ENCODE measurements at regions of chr21 and their contacts with region 1.

Region 1: GRCh38 chr21:30340441-30341241 is 3.1 kb upstream of the KRTAP27-1 start:
- DNase-seq: peak in 1 of 3 donors; percentile 64
- ATAC-seq: no peak
- H3K4me3 ChIP-seq: no peak overlapping the region
- H3K27ac ChIP-seq: no peak overlapping the region
- H3K4me1 ChIP-seq: no peaks in the 10 kb centered on the region
- H3K27me3 ChIP-seq: no peaks in the 10 kb centered on the region

Region 2: DNA sequence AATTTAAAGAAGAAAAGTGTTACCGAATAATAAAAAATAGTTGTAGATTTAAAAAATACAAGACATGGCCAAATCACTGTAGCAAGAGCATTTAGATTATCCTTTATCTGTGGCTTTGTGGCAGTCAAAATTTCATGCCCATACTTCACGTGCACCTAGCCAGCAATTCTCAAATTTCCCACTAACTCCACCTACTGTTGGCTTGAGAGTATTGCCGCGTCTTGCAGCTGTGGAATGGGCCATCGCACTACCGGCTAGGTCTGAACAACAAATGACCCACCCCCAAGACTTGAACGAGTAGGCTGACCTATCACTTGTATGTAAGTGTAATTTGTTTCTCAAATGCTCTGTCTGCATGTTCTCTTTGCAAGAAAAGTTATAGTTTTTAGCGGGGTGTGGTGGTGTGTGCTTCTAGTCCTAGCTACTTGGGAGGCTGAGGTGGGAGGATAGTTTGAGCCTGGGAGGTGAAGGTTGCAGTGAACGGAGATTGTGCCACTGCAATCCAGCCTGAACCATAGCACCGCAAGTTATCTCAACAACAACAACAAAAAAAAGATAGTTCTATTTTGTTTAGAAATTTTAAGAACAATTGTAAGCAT is 93.5 kb after region 1 on chr21:
- intact Hi-C with region 1: loop called in 2 of 4 experiments (anchors 10 kb)
- DNase-seq: no peak
- ATAC-seq: peak; percentile 28 to 62
- H3K4me3 ChIP-seq: no peak overlapping the region
- H3K27ac ChIP-seq: no peak overlapping the region
- H3K4me1 ChIP-seq: no peaks in the 10 kb centered on the region
- H3K27me3 ChIP-seq: no peaks in the 10 kb centered on the region

Region 3: GRCh38 chr21:30733026-30733425 is 392.4 kb after region 1 on chr21:
- intact Hi-C with region 1: loop called in 1 of 4 experiments (anchors 10 kb)
- DNase-seq: no peak
- ATAC-seq: no peak
- H3K4me3 ChIP-seq: no peak overlapping the region
- H3K27ac ChIP-seq: no peak overlapping the region
- H3K4me1 ChIP-seq: no peaks in the 10 kb centered on the region
- H3K27me3 ChIP-seq: no peaks in the 10 kb centered on the region

Measured in right cardiac atrium (tissue), 5 donors.